Activated CD4-positive, alpha-beta T cell treated with anti-CD3 and anti-CD28 coated beads for 36 hours (primary cell): ENCODE measurements at regions of chr3 and their contacts with region 1.

Region 1: DNA sequence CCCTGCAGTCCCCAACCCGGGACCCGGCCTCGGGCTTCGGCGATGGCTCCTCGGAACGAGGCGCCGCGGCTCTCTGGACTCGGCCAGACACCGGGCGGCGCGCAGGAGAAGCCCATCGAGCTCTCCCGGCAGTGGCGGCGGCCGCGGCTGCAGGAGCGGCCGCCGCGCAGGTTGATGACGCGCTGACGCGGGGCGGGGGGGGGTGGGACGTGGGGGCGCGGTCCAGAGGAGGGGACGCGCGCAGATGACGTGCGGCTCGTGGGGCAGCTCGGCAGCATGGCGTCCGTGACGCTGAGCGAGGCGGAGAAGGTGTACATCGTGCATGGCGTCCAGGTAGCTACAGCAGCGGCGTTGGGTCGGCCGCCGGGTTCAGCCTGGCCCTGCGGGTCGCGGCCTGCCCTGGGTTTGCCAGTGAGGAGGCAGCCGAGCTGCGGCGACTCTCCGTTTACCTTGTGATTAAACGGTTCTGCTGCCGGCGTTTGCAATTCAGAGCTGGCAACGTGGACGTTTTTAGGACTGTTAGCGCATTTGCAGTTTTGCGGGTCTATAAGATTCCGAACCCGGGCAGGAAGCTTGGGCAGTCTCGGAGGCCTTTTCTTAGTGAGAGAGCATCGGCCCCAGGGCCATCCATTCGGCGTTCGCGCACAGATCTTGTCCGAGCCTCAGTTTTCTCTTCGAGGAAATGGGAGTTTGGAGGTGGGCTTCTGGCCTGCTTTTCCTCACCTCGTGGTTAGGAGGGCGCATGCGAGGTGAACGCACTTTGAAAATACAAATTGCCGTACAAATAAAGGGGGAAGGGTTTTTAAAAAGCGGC is at the starts of genes EXOSC7 and ZDHHC3:
- DNase-seq: peak; percentile 92
- ATAC-seq: peak; percentile 89
- H3K4me3 Mint-ChIP-seq: peak within 1 kb of the TSS; percentile 92
- H3K27ac Mint-ChIP-seq: peak within 1 kb of the TSS; percentile 96
- H3K4me1 Mint-ChIP-seq: peaks cover 54% of the 10 kb centered on the region
- H3K27me3 Mint-ChIP-seq: no peaks in the 10 kb centered on the region
- total RNA-seq, gene EXOSC7: 42.7 to 70.7 TPM
- total RNA-seq, gene ZDHHC3: 31.9 to 32.9 TPM

Region 2: GRCh38 chr3:43621656-43622432 is 1354.4 kb before region 1 on chr3 and contains the start of gene ANO10:
- CTCF ChIA-PET with region 1: no interaction called
- POLR2A ChIA-PET with region 1: no interaction called
- intact Hi-C with region 1: loop called in 1 of 2 experiments (anchors 5 kb)
- DNase-seq: peak; percentile 98
- ATAC-seq: peak; percentile 95
- H3K4me3 Mint-ChIP-seq: peak within 1 kb of the TSS; percentile 83
- H3K27ac Mint-ChIP-seq: peak within 1 kb of the TSS; percentile 87
- H3K4me1 Mint-ChIP-seq: peaks cover 12% of the 10 kb centered on the region
- H3K27me3 Mint-ChIP-seq: no peaks in the 10 kb centered on the region
- total RNA-seq, gene ANO10: 6.9 to 9.4 TPM

Region 3: GRCh38 chr3:44510000-44510368 is 466.2 kb before region 1 on chr3:
- CTCF ChIA-PET with region 1: no interaction called
- POLR2A ChIA-PET with region 1: no interaction called
- intact Hi-C with region 1: loop called in 1 of 2 experiments (anchors 1 kb)
- DNase-seq: no peak
- ATAC-seq: no peak
- H3K4me3 Mint-ChIP-seq: peak overlapping the region; percentile 77
- H3K27ac Mint-ChIP-seq: peak overlapping the region; percentile 76
- H3K4me1 Mint-ChIP-seq: peaks cover 30% of the 10 kb centered on the region
- H3K27me3 Mint-ChIP-seq: no peaks in the 10 kb centered on the region

Region 4: DNA sequence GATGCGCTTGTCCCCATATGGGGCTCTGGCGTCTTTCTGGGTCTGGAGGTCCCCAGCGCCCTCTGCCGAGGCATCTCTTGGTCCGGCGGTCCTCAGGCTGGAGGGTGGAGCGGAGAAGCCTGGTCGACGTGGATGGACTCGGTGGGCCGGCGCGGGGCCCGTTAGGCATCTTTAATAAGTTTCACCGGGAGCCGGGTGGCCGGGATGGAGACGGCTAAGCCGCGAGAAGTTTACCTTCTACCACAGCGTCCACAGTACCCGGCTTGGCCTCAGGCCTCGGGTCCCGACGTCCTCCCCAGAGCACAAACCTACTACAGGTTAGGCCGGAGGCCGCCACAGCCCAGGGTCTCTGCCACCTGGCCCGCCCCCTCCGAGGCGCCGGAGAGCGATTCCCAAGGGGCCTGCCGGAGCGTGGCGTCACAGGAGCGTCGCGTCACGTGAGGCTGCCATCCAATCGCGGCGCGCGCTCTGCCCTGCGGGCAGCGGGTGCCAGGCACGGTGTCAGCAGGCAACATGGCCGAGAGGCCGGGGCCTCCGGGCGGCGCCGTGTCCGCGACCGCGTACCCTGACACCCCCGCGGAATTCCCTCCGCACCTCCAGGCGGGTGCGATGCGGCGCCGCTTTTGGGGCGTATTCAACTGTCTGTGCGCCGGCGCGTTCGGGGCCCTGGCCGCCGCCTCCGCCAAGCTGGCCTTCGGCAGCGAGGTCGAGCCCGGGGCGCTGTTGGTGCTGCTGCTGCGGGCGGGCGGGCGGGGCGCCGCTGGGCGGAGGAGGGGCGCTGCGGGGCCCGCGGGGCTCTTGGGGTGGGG is 114.6 kb before region 1 on chr3 and contains the start of gene TMEM42:
- CTCF ChIA-PET with region 1: no interaction called
- POLR2A ChIA-PET with region 1: no interaction called
- intact Hi-C with region 1: loop called in 1 of 2 experiments (anchors 2 kb)
- DNase-seq: peak; percentile 91
- ATAC-seq: peak; percentile 96
- H3K4me3 Mint-ChIP-seq: peak within 1 kb of the TSS; percentile 78
- H3K27ac Mint-ChIP-seq: peak within 1 kb of the TSS; percentile 73
- H3K4me1 Mint-ChIP-seq: peaks cover 34% of the 10 kb centered on the region
- H3K27me3 Mint-ChIP-seq: no peaks in the 10 kb centered on the region
- total RNA-seq, gene TMEM42: 7.6 to 10.9 TPM

Region 5: GRCh38 chr3:45167011-45167911 is 191.1 kb after region 1 on chr3:
- CTCF ChIA-PET with region 1: no interaction called
- POLR2A ChIA-PET with region 1: no interaction called
- intact Hi-C with region 1: loop called in 1 of 2 experiments (anchors 5 kb)
- DNase-seq: peak; percentile 94
- ATAC-seq: peak; percentile 96
- H3K4me3 Mint-ChIP-seq: peak overlapping the region; percentile 63
- H3K27ac Mint-ChIP-seq: peak overlapping the region; percentile 98
- H3K4me1 Mint-ChIP-seq: peaks cover 37% of the 10 kb centered on the region
- H3K27me3 Mint-ChIP-seq: no peaks in the 10 kb centered on the region

Region 6: GRCh38 chr3:45443459-45443858 is 467.2 kb after region 1 on chr3:
- CTCF ChIA-PET with region 1: no interaction called
- POLR2A ChIA-PET with region 1: no interaction called
- intact Hi-C with region 1: no loop called
- DNase-seq: no peak
- ATAC-seq: no peak
- H3K4me3 Mint-ChIP-seq: no peak overlapping the region
- H3K27ac Mint-ChIP-seq: no peak overlapping the region
- H3K4me1 Mint-ChIP-seq: peaks cover 2% of the 10 kb centered on the region
- H3K27me3 Mint-ChIP-seq: no peaks in the 10 kb centered on the region

Region 7: DNA sequence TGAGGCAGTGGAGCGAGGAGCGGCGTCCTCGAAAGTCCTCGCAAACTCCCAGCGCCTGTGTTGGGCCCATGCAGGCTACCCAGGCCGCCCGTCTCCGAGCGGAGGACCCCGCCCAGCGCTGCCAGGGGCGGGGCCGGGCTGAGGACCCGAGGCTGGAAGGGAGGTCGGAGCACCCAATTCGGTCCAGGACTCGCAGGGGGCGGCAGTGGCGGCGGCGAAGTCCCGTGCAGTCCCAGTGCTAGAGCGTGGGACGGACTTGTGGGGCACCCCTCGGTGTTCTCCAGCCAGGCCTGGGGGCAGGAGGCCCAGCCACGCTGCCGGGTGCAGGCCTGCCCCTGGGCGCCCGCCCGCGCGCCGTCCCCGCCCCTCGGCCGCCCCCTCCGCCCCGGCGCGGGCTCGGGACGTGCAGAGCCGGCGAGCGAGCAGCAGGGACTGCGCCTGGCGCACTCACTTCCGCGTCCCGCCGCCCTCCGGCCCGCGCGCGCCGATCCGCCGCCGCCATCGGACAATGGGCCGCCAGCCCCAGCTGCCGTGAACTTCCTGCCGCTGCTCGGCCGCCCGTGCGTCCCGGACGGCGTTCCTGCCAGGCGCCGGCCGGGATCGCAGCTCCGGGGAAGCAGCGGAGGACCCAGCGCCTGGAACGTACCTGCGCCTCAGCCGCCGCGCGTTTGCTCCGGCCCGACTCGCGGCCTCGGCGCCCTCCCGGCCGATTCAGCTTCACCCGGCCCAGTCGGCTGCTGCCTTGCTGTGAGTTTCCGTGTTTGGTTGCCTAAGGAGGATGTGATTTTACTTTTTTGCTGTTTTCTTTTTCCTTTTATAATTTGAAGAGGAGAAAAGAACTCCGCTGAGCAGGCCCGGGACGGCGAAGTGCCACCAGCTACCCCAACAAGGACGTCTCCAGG is 617.8 kb after region 1 on chr3:
- CTCF ChIA-PET with region 1: no interaction called
- POLR2A ChIA-PET with region 1: interaction called, 3 read pairs
- intact Hi-C with region 1: loop called in 1 of 2 experiments (anchors 1 kb)
- DNase-seq: peak; percentile 82
- ATAC-seq: peak; percentile 81
- H3K4me3 Mint-ChIP-seq: peak overlapping the region; percentile 86
- H3K27ac Mint-ChIP-seq: peak overlapping the region; percentile 82
- H3K4me1 Mint-ChIP-seq: peaks cover 46% of the 10 kb centered on the region
- H3K27me3 Mint-ChIP-seq: no peaks in the 10 kb centered on the region